Esophagus muscularis mucosa (tissue), 4 donors: ENCODE measurements at regions of chr14 and their contacts with region 1.

Region 1: DNA sequence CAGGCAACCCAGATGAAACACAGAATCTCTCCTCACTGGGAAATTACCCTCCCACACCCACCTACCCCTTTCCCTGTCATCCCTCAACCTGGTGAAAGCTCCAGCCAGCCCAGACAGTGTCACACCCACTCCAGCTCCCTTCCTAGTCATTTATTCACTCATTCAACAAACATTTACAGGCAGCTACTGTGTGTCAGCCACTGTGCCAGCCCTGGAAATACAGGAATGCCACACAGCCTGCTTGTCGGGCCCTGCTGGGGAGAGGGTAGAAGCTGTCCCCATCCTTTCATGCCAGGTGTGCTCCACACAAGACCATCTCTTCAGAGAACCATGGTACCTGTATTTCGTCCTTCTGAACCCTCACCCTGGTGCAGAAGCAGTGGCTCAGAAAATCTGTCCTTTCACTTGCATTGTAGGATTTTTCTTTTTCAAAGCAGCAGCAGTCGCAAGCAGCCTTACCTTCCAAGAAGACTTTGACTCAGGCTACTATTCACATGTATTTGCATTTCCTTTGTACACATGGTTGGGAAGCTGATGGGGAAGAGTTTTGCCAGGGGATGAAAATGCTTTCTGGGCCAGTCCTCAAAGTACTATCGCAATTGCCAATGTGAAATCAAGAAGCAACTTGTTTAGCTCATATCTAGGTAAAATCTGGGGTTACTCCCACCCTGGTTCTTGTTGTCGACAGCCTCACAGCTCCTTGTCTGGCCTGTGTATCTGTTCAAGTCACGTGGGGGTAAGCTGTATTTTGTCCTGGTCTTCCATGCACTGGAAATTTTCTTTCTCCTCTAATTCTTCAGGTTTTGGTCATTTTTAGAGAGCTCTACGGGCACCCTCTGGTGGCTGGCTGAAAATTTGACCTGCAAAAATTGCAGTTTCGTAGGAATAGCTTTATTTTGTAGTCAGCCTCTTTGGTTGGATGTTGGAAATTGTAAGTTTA is 147.4 kb upstream of the EGLN3 start:
- DNase-seq: no peak
- H3K4me3 ChIP-seq: no peak overlapping the region
- H3K27ac ChIP-seq: no peak overlapping the region
- H3K4me1 ChIP-seq: peaks cover 0 to 10% (median 6%) of the 10 kb centered on the region in 4 donors
- H3K27me3 ChIP-seq: no peaks in the 10 kb centered on the region
- CTCF ChIP-seq: peak; percentile 61 to 70 (median 68)
- EP300 ChIP-seq: no peak
- POLR2A ChIP-seq: no peak

Region 2: GRCh38 chr14:33839193-33840076 is 258.9 kb before region 1 on chr14:
- intact Hi-C with region 1: loop called (anchors 1 kb)
- DNase-seq: peak; percentile 91
- H3K4me3 ChIP-seq: no peak overlapping the region
- H3K27ac ChIP-seq: no peak overlapping the region
- H3K4me1 ChIP-seq: peaks cover 3 to 11% (median 7%) of the 10 kb centered on the region in 4 donors
- H3K27me3 ChIP-seq: no peaks in the 10 kb centered on the region
- CTCF ChIP-seq: peak; percentile 81 to 86 (median 84)
- EP300 ChIP-seq: no peak
- POLR2A ChIP-seq: no peak

Region 3: GRCh38 chr14:34064349-34064748 is 34.0 kb before region 1 on chr14:
- intact Hi-C with region 1: no loop called
- DNase-seq: peak; percentile 94
- H3K4me3 ChIP-seq: no peak overlapping the region
- H3K27ac ChIP-seq: peak overlapping the region; percentile 53 to 68 (median 59)
- H3K4me1 ChIP-seq: peaks cover 23 to 35% (median 29%) of the 10 kb centered on the region in 4 donors
- H3K27me3 ChIP-seq: no peaks in the 10 kb centered on the region
- CTCF ChIP-seq: peak in 1 of 3 experiments; percentile 15
- EP300 ChIP-seq: no peak
- POLR2A ChIP-seq: no peak

Region 4: DNA sequence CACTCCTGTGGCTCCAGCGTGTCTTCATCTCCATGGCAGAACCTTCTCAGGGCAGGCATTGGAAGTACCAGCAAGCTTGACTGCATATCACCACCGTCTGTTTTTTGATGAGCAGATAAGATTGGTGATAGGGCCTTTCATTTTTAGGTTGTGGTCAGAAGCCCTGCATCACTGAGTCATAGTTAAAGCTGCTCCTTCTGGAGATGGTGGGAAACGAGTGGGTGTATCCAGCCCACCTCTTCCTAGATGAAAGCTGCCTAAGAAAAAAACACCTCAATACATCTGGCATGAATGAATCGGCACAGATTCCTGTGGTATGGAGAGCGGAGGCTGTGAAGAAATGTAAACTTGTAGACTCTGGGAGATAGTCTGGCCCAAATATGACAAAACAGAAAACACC is 101.2 kb after region 1 on chr14:
- intact Hi-C with region 1: no loop called
- DNase-seq: no peak
- H3K4me3 ChIP-seq: no peak overlapping the region
- H3K27ac ChIP-seq: no peak overlapping the region
- H3K4me1 ChIP-seq: no peaks in the 10 kb centered on the region
- H3K27me3 ChIP-seq: no peaks in the 10 kb centered on the region
- CTCF ChIP-seq: no peak
- EP300 ChIP-seq: no peak
- POLR2A ChIP-seq: no peak

Region 5: DNA sequence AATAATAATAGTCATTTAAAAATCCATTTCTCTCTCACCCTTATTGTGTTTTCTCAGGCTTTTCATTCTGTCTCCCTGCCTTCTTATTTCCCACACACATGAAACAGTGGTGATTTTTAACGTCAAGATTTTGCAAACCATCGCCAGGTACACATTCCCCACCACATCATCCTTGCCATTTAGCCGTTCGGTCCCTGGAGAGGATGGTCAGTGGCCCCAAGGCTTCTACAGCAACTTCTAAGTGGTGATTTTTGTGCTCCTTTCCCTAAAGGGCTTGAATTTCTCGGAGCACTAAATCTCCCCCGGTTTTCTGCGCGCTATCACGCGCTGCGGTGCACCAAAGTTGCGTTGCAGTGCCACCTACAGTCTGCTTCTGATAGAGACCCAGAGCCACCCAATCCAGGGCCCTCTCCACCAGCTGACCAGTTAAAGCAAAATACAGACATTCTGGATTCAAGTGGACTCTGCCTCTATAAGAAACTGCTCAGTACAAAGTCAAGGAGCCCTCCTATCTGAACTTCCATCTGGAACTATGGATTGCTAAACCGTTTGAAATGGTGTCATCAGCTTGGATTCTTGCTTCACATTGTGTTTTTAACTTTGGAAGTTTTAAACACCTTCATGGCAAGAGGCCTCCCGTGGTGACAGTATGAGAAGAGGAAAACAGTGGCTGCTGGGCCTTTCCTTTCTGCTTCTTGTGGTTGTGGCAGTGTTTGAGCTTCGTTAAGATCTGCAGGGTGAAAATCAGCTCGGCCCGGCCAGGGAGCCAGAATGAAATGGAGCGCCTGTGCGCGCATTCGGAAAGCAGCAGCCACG is 129.7 kb after region 1 on chr14:
- intact Hi-C with region 1: loop called (anchors 10 kb)
- DNase-seq: no peak
- H3K4me3 ChIP-seq: peak overlapping the region; percentile 17 to 35 (median 28)
- H3K27ac ChIP-seq: peak overlapping the region; percentile 24 to 68 (median 58)
- H3K4me1 ChIP-seq: peaks cover 4 to 37% (median 31%) of the 10 kb centered on the region in 4 donors
- H3K27me3 ChIP-seq: no peaks in the 10 kb centered on the region
- CTCF ChIP-seq: peak; percentile 71 to 88 (median 86)
- EP300 ChIP-seq: no peak
- POLR2A ChIP-seq: no peak

Region 6: GRCh38 chr14:34300882-34301734 is 202.8 kb after region 1 on chr14:
- intact Hi-C with region 1: loop called (anchors 5 kb)
- DNase-seq: no peak
- H3K4me3 ChIP-seq: no peak overlapping the region
- H3K27ac ChIP-seq: no peak overlapping the region
- H3K4me1 ChIP-seq: peaks cover 0 to 17% (median 6%) of the 10 kb centered on the region in 4 donors
- H3K27me3 ChIP-seq: no peaks in the 10 kb centered on the region
- CTCF ChIP-seq: peak; percentile 59 to 67 (median 60)
- EP300 ChIP-seq: no peak
- POLR2A ChIP-seq: no peak